Psoas muscle (tissue), 8 donors: ENCODE measurements at regions of chr5 and their contacts with region 1.

Region 1: DNA sequence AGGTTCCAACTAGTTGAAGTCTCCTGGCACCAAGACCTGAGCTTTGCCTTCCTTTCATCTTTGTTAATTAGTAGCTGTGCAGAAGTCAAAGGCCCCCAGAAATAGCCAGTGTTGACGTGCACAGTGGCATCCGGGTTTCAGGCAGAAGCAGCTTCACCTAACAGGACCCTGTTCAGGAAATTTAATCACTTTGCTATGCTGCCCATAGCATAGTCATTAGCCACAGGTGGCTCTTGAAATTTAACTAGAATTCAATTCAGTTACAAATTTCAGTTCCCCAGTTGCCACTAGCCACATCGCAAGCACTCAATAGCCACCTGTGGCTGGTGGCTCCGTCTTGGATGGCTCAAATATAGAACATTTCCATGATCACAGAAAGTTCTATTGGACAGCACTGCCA is 179.1 kb downstream of the GOLPH3 start:
- DNase-seq: no peak
- ATAC-seq: no peak
- H3K4me3 ChIP-seq: no peak overlapping the region
- H3K27ac ChIP-seq: no peak overlapping the region
- H3K4me1 ChIP-seq: no peaks in the 10 kb centered on the region
- H3K27me3 ChIP-seq: no peaks in the 10 kb centered on the region
- CTCF ChIP-seq: no peak

Region 2: GRCh38 chr5:32319392-32319791 is 324.4 kb after region 1 on chr5:
- intact Hi-C with region 1: loop called in 1 of 2 experiments (anchors 5 kb)
- DNase-seq: no peak
- ATAC-seq: no peak
- H3K4me3 ChIP-seq: no peak overlapping the region
- H3K27ac ChIP-seq: no peak overlapping the region
- H3K4me1 ChIP-seq: no peaks in the 10 kb centered on the region
- H3K27me3 ChIP-seq: no peaks in the 10 kb centered on the region
- CTCF ChIP-seq: no peak